A549 (cell line): ENCODE measurements at regions of chr16 and their contacts with region 1.

Region 1: DNA sequence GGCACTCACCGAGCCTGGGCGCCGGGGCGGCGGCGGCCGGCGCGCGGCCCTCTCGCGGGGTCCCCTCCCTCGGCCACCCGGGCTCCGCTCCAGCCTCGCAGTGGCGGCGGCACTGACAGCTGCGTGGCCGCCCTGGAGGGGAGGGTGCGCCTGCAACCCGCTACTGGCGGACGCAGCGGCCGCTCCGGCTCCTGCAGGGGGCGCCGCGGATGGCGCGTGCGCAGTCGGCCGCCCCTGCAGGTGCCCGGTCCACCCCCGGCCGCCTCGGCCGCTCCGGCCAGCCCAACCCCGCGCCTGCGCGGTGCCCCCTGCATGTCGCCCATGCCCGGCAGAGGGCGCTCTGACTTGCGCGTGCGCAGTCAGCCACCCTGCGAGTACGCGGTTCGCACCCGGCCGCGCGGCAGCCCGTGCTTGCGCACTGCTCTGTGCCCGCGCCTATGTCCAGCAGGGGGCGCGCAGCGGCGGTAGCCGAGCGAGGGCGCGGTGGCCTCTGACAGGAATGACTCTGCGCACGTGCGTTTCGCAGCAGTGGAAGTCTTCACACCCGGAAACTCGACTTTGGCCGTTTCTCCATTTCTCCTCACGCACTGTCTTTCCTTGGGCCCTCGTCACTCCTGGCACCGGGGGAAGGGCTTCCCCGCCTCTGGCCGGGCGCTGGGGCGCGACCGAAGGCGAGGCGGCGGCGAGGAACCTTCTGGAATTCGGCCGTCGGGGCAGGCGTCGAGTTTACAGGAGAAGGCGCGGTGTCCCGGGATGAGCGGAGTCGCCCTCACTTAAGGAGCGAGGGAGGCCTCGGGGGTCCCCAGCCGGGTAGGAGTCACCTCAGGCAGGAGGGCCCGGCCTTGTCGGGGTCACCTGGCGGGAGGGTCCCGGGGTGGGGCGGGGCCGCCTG is at the start of gene ABCA3:
- DNase-seq: peak; percentile 84 to 95
- ATAC-seq: peak; percentile 86 to 93
- H3K4me3 ChIP-seq: peak within 1 kb of the TSS; percentile 82
- H3K27ac ChIP-seq: peak within 1 kb of the TSS; percentile 77 to 94
- H3K4me1 ChIP-seq: peaks cover 11% of the 10 kb centered on the region; the same call in 2 of the 3 replicates
- CTCF ChIP-seq: peak; percentile 100
- EP300 ChIP-seq: no peak
- POLR2A ChIP-seq: peak; percentile 62
- RAD21 ChIP-seq: peak; percentile 60 to 74
- polyA plus RNA-seq, gene ABCA3: 6.4 and 7.6 TPM in 2 replicates

Region 2: DNA sequence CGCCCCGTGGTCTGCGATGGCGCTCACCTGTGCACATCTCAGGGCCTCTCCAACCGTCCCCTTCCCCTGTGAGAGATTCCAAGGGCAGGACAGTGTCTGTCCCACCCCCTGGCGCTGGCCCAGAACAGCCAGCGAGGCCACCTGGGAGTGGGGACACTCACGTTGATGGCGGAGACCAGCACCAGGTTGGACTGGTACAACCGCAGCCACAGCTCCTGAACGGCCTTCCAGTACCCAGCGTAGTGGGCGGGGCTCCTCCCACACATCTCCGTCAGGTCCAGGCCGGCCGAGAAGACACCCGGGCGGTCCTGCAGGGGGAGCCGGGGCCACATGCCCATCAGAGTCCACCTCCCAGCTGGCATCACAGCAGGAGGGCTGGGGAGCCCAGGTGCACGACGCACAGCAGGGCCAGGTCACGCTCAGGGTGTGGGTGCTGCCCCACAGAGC is 96.5 kb before region 1 on chr16:
- CTCF ChIA-PET with region 1: no interaction called
- POLR2A ChIA-PET with region 1: no interaction called
- DNase-seq: no peak
- ATAC-seq: peak; percentile 36 to 56; a peak in 5 of 6 replicates
- H3K4me3 ChIP-seq: no peak overlapping the region
- H3K27ac ChIP-seq: no peak overlapping the region
- H3K4me1 ChIP-seq: no peaks in the 10 kb centered on the region
- CTCF ChIP-seq: no peak
- EP300 ChIP-seq: no peak
- POLR2A ChIP-seq: no peak
- RAD21 ChIP-seq: no peak

Region 3: GRCh38 chr16:2288726-2289125 is 52.1 kb before region 1 on chr16:
- CTCF ChIA-PET with region 1: interaction called, 10 read pairs
- POLR2A ChIA-PET with region 1: no interaction called
- DNase-seq: no peak
- ATAC-seq: no peak
- H3K4me3 ChIP-seq: no peak overlapping the region
- H3K27ac ChIP-seq: no peak overlapping the region
- H3K4me1 ChIP-seq: no peaks in the 10 kb centered on the region
- CTCF ChIP-seq: no peak
- EP300 ChIP-seq: no peak
- POLR2A ChIP-seq: no peak
- RAD21 ChIP-seq: no peak

Region 4: GRCh38 chr16:2296661-2297505 is 43.9 kb before region 1 on chr16:
- CTCF ChIA-PET with region 1: interaction called, 13 read pairs
- POLR2A ChIA-PET with region 1: no interaction called
- DNase-seq: peak; percentile 22 to 62
- ATAC-seq: peak; percentile 65 to 90; a peak in 5 of 6 replicates
- H3K4me3 ChIP-seq: no peak overlapping the region
- H3K27ac ChIP-seq: no peak overlapping the region
- H3K4me1 ChIP-seq: no peaks in the 10 kb centered on the region
- CTCF ChIP-seq: peak; percentile 39; the same call in 1 of the 3 replicates
- EP300 ChIP-seq: no peak
- POLR2A ChIP-seq: no peak
- RAD21 ChIP-seq: peak in 1 of 2 experiments; percentile 64; a peak in 2 of 5 replicates

Region 5: GRCh38 chr16:2358811-2359210 is 18.0 kb after region 1 on chr16:
- CTCF ChIA-PET with region 1: interaction called, 15 read pairs
- POLR2A ChIA-PET with region 1: no interaction called
- DNase-seq: no peak
- ATAC-seq: no peak
- H3K4me3 ChIP-seq: no peak overlapping the region
- H3K27ac ChIP-seq: no peak overlapping the region
- H3K4me1 ChIP-seq: no peaks in the 10 kb centered on the region
- CTCF ChIP-seq: no peak
- EP300 ChIP-seq: no peak
- POLR2A ChIP-seq: no peak
- RAD21 ChIP-seq: no peak

Region 6: DNA sequence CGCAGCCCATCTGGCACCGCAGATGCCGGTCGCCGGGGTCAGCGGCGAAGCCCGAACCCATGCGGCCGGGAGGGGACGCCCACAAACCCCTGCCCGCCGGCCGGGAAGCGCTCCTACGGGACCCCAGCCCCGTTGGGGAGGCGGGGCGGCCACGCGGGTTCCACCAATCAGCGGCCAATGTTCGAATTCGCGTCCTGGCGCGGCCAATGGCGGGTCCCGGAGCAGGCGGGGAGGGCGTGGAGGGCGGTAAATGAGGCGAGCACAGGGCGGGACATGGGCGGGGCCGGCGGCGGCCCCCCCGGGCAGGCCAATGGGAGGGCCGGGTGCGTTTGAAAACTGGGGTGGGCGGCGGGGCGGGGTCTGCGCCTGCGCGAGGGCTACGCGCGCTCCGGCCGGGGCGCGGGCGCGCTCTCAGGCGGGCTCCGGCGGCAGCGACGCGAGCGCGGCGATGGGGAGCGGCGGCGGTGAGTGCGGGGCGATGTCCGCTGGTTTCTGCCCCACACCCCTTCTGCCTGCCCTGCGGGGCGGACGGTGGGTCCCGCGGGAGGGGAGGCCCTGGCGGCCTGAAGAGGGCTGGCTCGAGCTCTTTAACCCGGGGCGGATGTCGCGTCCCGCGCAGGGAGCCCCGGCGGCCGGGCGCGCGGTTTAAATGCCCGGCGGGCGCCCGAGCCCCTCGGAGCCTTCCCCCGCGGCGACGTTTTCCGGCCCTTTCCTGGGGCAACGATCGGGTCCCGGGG is 88.4 kb after region 1 on chr16 and contains the start of gene CCNF:
- CTCF ChIA-PET with region 1: interaction called, 13 read pairs
- POLR2A ChIA-PET with region 1: no interaction called
- DNase-seq: peak; percentile 94 to 96
- ATAC-seq: peak; percentile 84 to 95
- H3K4me3 ChIP-seq: peak within 1 kb of the TSS; percentile 90
- H3K27ac ChIP-seq: peak within 1 kb of the TSS; percentile 84 to 98
- H3K4me1 ChIP-seq: peaks cover 17% of the 10 kb centered on the region; the same call in 2 of the 3 replicates
- CTCF ChIP-seq: no peak
- EP300 ChIP-seq: no peak
- POLR2A ChIP-seq: peak; percentile 83
- RAD21 ChIP-seq: no peak
- polyA plus RNA-seq, gene CCNF: 6.5 and 8.0 TPM in 2 replicates